Activated CD4-positive, alpha-beta T cell treated with anti-CD3 and anti-CD28 coated beads for 36 hours (primary cell): ENCODE measurements at regions of chr15 and their contacts with region 1.

Region 1: GRCh38 chr15:97076011-97076410 is 745.5 kb downstream of the NR2F2 start:
- DNase-seq: no peak
- ATAC-seq: no peak
- H3K4me3 Mint-ChIP-seq: no peak overlapping the region
- H3K27ac Mint-ChIP-seq: no peak overlapping the region
- H3K4me1 Mint-ChIP-seq: no peaks in the 10 kb centered on the region
- H3K27me3 Mint-ChIP-seq: no peaks in the 10 kb centered on the region

Region 2: GRCh38 chr15:96020133-96020532 is 1055.9 kb before region 1 on chr15:
- CTCF ChIA-PET with region 1: no interaction called
- POLR2A ChIA-PET with region 1: no interaction called
- intact Hi-C with region 1: no loop called
- DNase-seq: no peak
- ATAC-seq: no peak
- H3K4me3 Mint-ChIP-seq: no peak overlapping the region
- H3K27ac Mint-ChIP-seq: no peak overlapping the region
- H3K4me1 Mint-ChIP-seq: no peaks in the 10 kb centered on the region
- H3K27me3 Mint-ChIP-seq: peaks cover 9% of the 10 kb centered on the region

Region 3: GRCh38 chr15:97045666-97046421 is 30.2 kb before region 1 on chr15:
- CTCF ChIA-PET with region 1: no interaction called
- POLR2A ChIA-PET with region 1: no interaction called
- intact Hi-C with region 1: loop called in 1 of 2 experiments (anchors 1 kb)
- DNase-seq: no peak
- ATAC-seq: no peak
- H3K4me3 Mint-ChIP-seq: no peak overlapping the region
- H3K27ac Mint-ChIP-seq: no peak overlapping the region
- H3K4me1 Mint-ChIP-seq: no peaks in the 10 kb centered on the region
- H3K27me3 Mint-ChIP-seq: no peaks in the 10 kb centered on the region

Region 4: GRCh38 chr15:97177151-97177577 is 101.2 kb after region 1 on chr15:
- CTCF ChIA-PET with region 1: no interaction called
- POLR2A ChIA-PET with region 1: no interaction called
- intact Hi-C with region 1: no loop called
- DNase-seq: no peak
- ATAC-seq: no peak
- H3K4me3 Mint-ChIP-seq: no peak overlapping the region
- H3K27ac Mint-ChIP-seq: no peak overlapping the region
- H3K4me1 Mint-ChIP-seq: no peaks in the 10 kb centered on the region
- H3K27me3 Mint-ChIP-seq: no peaks in the 10 kb centered on the region